K562 (cell line): ENCODE measurements at regions of chr5 and their contacts with region 1.

Region 1: GRCh38 chr5:95846554-95847260 is 24.2 kb upstream of the GLRX start:
- DNase-seq: peak; percentile 76 to 80 (median 78)
- ATAC-seq: peak; percentile 81
- H3K4me3 ChIP-seq: no peak overlapping the region
- H3K27ac ChIP-seq: no peak overlapping the region
- H3K4me1 ChIP-seq: peaks cover 0 to 20% of the 10 kb centered on the region in 2 experiments; a peak in 4 of 5 replicates
- H3K27me3 ChIP-seq: no peaks in the 10 kb centered on the region
- CTCF ChIP-seq: peak; percentile 83 to 96 (median 89)
- EP300 ChIP-seq: no peak
- POLR2A ChIP-seq: no peak
- RAD21 ChIP-seq: peak; percentile 95 to 97

Region 2: GRCh38 chr5:94968507-94969095 is 878.1 kb before region 1 on chr5:
- CTCF ChIA-PET with region 1: no interaction called
- POLR2A ChIA-PET with region 1: no interaction called
- in situ Hi-C with region 1: loop called (anchors 25 kb)
- intact Hi-C with region 1: loop called (anchors 2 kb)
- DNase-seq: peak; percentile 11 to 61 (median 22)
- ATAC-seq: peak; percentile 93
- H3K4me3 ChIP-seq: no peak overlapping the region
- H3K27ac ChIP-seq: no peak overlapping the region
- H3K4me1 ChIP-seq: no peaks in the 10 kb centered on the region
- H3K27me3 ChIP-seq: no peaks in the 10 kb centered on the region
- CTCF ChIP-seq: peak; percentile 54 to 75 (median 71)
- EP300 ChIP-seq: no peak
- POLR2A ChIP-seq: no peak
- RAD21 ChIP-seq: peak; percentile 67 to 80

Region 3: GRCh38 chr5:95446009-95446408 is 400.7 kb before region 1 on chr5:
- CTCF ChIA-PET with region 1: no interaction called
- POLR2A ChIA-PET with region 1: no interaction called
- in situ Hi-C with region 1: no loop called
- intact Hi-C with region 1: loop called (anchors 10 kb)
- DNase-seq: peak in 3 of 4 experiments; percentile 5 to 33 (median 29)
- ATAC-seq: peak; percentile 77
- H3K4me3 ChIP-seq: no peak overlapping the region
- H3K27ac ChIP-seq: no peak overlapping the region
- H3K4me1 ChIP-seq: peaks cover 0 to 11% of the 10 kb centered on the region in 2 experiments; a peak in 2 of 5 replicates
- H3K27me3 ChIP-seq: peaks cover 3 to 5% of the 10 kb centered on the region in 2 experiments; a peak in 4 of 5 replicates
- CTCF ChIP-seq: no peak
- EP300 ChIP-seq: no peak
- POLR2A ChIP-seq: no peak
- RAD21 ChIP-seq: no peak

Region 4: DNA sequence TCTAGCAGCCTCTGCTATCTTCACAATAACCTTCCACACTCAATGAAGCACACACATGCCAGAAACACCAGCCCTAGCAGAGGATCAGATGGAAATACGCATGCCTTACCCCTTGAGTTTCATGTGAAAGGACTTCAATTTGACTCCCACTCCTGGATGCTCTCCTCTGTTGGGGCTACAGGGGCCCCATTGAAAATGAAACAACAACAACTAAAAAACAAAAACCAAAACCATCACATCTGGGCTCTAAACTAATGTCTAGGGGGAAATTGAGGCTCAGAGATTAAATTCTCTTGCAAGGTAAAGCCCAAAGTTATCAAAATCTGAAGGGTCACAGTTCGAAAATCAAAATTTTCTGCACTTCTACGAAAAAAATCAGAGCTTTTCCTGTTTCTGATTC is 208.1 kb before region 1 on chr5:
- CTCF ChIA-PET with region 1: interaction called, 21 read pairs
- POLR2A ChIA-PET with region 1: no interaction called
- in situ Hi-C with region 1: loop called (anchors 5 kb)
- intact Hi-C with region 1: no loop called
- DNase-seq: no peak
- ATAC-seq: no peak
- H3K4me3 ChIP-seq: no peak overlapping the region
- H3K27ac ChIP-seq: no peak overlapping the region
- H3K4me1 ChIP-seq: peaks cover 0 to 9% of the 10 kb centered on the region in 2 experiments; a peak in 4 of 5 replicates
- H3K27me3 ChIP-seq: no peaks in the 10 kb centered on the region
- CTCF ChIP-seq: no peak
- EP300 ChIP-seq: no peak
- POLR2A ChIP-seq: no peak
- RAD21 ChIP-seq: no peak

Region 5: DNA sequence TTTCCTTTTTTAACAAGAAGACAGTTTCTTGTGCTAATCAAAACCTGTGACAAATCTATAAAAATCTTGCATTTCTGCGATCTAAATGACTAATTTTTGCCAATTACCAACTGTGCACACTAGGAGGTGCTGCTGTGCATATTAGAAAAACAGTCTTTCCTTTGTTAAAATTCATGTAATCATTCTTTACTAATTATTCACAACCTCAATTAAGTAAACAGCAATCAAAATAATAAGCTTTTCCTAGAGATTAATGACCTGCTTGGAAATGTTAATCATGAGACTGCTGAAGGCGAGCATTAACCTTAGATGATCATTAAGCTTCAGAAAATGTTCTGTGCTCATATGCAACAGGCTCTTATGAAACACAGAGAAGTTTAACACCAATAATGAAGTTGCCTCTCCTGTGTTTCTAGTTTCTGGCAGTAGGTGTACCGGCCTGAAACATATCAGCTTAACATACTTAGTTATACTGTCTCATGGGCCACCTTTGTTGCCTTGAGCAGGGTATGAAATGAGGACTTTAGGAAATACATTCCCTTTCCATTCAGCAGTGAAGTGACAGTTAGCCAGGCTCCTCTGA is 182.4 kb before region 1 on chr5:
- CTCF ChIA-PET with region 1: interaction called, 12 read pairs
- POLR2A ChIA-PET with region 1: no interaction called
- in situ Hi-C with region 1: no loop called
- intact Hi-C with region 1: loop called (anchors 1 kb)
- DNase-seq: peak in 2 of 4 experiments; percentile 23 to 66
- ATAC-seq: peak; percentile 24
- H3K4me3 ChIP-seq: no peak overlapping the region
- H3K27ac ChIP-seq: peak overlapping the region; percentile 39
- H3K4me1 ChIP-seq: peaks cover 0 to 16% of the 10 kb centered on the region in 2 experiments; a peak in 3 of 5 replicates
- H3K27me3 ChIP-seq: no peaks in the 10 kb centered on the region
- CTCF ChIP-seq: peak; percentile 48 to 83 (median 66); a peak in 5 of 6 replicates
- EP300 ChIP-seq: no peak
- POLR2A ChIP-seq: no peak; the same call in none of the 2 replicates
- RAD21 ChIP-seq: peak; percentile 84 to 89

Region 6: DNA sequence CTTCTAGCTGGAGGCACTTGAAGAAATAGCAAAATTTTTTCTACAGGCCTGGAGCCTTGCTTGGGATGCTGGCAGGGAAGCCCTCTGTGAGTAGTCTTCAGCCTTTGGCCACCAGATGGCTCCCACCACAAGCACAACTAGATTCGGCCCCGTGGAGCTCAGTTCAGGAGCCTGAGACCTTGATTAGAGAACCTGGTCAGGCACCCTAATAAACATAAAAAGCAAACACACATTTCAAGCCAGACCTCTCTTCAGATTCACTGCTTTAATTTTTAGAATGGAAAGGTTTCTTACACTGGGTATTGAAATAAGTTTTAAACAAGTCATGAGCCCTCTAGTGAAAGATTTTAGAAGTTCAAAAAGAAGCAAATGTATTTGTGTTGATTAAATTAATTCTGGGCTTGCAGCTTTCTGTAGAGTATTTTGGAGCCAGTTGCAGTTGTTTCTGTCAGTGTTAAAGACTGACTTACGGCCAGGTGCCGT is 65.6 kb before region 1 on chr5:
- CTCF ChIA-PET with region 1: interaction called, 63 read pairs
- POLR2A ChIA-PET with region 1: interaction called, 3 read pairs
- in situ Hi-C with region 1: loop called (anchors 5 kb)
- intact Hi-C with region 1: loop called (anchors 1 kb)
- DNase-seq: peak in 3 of 4 experiments; percentile 35 to 79 (median 59)
- ATAC-seq: peak; percentile 97
- H3K4me3 ChIP-seq: no peak overlapping the region
- H3K27ac ChIP-seq: no peak overlapping the region
- H3K4me1 ChIP-seq: no peaks in the 10 kb centered on the region; a peak in 1 of 5 replicates
- H3K27me3 ChIP-seq: no peaks in the 10 kb centered on the region
- CTCF ChIP-seq: peak; percentile 84 to 97 (median 92)
- EP300 ChIP-seq: no peak
- POLR2A ChIP-seq: no peak; the same call in 1 of the 2 replicates
- RAD21 ChIP-seq: peak; percentile 89 to 93

Region 7: DNA sequence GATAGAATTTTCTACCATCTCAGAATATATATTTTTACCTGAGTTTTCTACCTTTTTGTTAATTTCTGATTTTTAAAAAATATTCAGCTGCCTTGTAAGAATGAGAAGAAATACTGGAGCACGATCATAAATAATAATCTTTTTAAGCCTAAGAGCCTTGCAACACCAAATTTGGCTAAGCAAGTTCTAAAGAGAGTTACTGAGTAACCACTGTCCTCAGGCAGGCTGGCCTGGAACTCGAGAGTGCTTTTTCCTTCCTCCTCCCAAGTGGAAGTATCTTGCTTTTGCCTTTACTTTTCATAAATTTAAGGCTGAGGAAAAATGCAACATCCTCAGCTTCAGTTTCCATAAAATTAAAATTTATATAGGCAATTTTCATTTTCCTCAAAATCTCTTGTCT is 45.2 kb before region 1 on chr5:
- CTCF ChIA-PET with region 1: no interaction called
- POLR2A ChIA-PET with region 1: no interaction called
- in situ Hi-C with region 1: no loop called
- intact Hi-C with region 1: no loop called
- DNase-seq: no peak
- ATAC-seq: no peak
- H3K4me3 ChIP-seq: no peak overlapping the region
- H3K27ac ChIP-seq: no peak overlapping the region
- H3K4me1 ChIP-seq: no peaks in the 10 kb centered on the region
- H3K27me3 ChIP-seq: no peaks in the 10 kb centered on the region
- CTCF ChIP-seq: no peak
- EP300 ChIP-seq: no peak
- POLR2A ChIP-seq: no peak
- RAD21 ChIP-seq: no peak